ENCODE measurements at regions of chr15 and their contacts with region 1.

Region 1: DNA sequence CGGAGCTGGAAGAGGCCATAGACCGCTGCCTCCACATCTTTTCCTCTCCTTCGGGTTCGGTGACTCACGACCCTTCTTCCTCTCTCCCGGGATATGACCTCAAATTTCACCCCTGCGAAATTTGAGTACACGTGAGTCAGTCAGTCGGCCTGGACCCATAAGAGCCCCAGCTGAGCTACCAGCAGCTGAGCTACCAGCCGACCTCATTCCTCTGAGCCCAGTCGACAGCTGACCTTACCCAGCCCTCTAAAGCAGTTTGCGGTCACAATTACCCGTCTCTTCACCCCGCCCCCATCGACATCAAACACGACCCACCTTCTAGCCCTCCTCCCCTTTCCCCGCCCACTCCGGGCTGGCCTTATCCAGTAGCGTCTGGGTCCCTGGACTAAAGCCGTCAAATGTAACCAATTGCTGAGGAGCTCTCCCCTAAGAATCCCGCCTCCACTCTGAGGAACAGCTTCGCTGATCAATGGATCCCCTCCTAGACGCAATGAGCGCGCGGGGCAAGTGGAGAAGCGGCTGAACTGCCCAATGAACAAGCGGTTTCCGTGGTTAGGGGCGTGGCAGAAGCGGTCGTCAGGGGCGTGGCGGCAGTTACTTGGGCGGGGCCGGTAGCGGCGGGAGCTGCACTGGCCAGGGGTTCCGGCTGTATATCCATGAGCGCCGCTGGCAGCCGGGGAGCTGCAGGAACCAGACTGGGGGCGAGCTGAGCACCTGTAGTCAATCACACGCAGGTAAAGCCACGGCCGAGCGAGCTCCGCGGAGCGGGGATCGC is at the start of gene ABHD2:
- DNase-seq: peak; percentile 100
- H3K4me3 ChIP-seq: peak within 1 kb of the TSS; percentile 82
- CTCF ChIP-seq: no peak

Region 2: GRCh38 chr15:89068325-89068784 is 19.7 kb before region 1 on chr15:
- CTCF ChIA-PET with region 1: interaction called, 4 read pairs
- POLR2A ChIA-PET with region 1: interaction called, 13 read pairs
- DNase-seq: peak; percentile 69
- H3K4me3 ChIP-seq: no peak overlapping the region
- CTCF ChIP-seq: no peak

Region 3: DNA sequence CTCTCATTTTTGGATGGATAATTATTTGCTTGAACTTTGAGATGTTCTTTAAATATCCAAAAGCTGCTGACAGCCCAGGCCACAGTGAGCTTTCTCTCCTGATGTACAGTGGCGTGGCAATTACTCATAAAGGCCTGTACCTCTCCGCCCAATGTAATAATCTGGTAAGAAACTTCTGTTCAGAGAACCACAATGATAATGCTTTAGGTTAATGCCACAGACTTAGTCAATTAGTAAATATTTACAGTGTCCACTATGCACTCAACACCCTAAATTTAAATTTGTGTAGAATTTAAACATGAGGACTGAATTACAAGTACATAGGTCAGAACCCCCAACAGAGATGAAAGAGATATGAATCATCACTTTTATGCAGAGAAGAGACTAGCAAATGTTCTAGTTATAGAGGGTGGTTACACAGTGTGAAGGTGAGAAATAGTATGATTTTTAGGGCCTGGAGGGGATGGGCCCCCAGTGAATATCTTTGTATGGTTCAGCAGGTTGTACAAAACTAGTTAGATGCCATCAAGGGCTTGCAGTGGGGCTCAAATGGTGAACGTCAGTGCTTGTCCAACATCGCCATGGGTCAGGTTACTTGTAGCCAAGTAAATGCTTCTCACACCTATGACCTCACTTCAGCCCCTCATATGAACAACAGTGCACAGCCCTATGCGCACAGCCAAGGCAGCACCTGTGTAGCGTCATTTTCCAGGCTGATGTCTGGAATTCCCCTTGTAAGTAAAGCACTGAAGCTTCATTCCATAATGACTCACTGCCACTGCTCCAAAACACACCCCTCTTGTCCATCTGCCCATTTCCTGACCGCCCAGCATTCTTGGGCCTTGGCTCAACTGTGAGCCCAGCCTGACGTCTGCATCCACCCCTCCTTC is 13.5 kb after region 1 on chr15:
- CTCF ChIA-PET with region 1: interaction called, 25 read pairs
- POLR2A ChIA-PET with region 1: interaction called, 8 read pairs
- DNase-seq: peak; percentile 93
- H3K4me3 ChIP-seq: no peak overlapping the region
- CTCF ChIP-seq: no peak

Region 4: DNA sequence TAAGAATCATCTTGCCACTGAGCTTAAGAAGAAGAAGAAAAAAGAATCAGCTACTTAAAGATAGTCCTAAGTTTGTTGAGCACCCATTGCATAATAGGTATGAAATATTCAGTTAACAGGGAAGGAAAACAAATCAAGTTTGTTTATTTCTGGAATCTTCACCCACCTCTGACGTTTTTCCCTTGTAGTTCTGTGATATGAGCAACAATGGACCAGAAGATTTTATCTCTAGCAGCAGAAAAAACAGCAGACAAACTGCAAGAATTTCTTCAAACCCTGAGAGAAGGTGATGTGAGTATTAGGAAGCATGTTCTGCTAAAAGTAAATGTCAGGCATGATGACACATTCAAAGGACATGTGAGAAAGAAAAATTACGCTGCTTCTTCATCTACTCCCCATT is 159.4 kb after region 1 on chr15:
- CTCF ChIA-PET with region 1: no interaction called
- POLR2A ChIA-PET with region 1: no interaction called
- DNase-seq: no peak
- H3K4me3 ChIP-seq: no peak overlapping the region
- CTCF ChIP-seq: no peak